Dorsolateral prefrontal cortex (tissue), 120 donors: ENCODE measurements at regions of chr12 and their contacts with region 1.

Region 1: DNA sequence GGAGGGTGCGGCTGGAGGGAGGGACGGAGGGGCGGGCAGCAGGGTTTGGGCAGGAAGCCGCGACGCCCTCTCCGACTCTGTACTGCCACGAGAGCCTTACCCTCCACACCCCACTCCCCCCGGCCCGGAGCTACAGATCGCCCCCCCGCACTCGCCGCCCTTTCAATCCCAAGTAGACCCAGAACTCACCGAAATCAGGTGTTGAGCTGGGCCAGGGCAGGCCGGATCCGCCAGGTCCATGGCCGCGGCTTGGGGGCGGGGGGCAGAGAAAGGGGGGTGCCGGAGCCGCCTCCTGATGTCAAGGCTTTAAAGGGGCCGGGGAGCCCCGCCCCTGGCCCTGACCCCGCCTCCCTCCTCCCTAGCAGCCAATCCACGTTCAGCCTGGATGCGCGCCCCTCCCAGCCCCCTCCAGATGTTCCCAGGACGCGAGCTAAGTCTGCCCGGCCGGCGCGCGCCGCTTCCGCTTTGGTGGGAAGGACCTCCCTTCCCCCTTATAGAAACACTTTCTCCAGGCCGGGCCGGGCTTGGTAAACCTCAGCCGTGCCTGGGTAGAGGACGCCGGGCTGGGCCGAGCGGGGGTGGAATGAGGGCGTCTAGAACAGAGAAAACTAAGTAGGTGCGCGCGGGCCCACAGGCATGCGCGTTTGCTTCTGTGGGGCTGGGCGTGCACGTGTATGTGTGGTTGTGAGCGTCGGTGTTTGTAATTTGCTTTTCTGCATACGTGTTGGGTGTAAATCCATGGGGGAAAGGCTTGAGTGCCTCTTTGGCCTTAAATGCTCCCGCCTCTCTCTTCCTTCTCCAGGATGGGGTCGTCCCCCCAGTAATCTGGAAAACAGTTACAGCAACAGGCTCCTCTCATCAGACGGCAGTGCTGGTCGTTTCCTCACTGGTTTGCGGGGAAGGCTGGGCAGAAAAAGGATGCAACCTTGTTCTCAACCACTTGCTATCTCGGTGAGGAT is at the start of gene NCKAP5L:
- DNase-seq: peak; percentile 90 to 95 (median 94)
- H3K4me3 ChIP-seq: peak within 1 kb of the TSS; percentile 53 to 95 (median 87)
- H3K27ac ChIP-seq: peak within 1 kb of the TSS in 58 of 59 donors; percentile 31 to 95 (median 89)
- H3K27me3 ChIP-seq: no peaks in the 10 kb centered on the region
- CTCF ChIP-seq: peak in 10 of 56 donors; percentile 3 to 29 (median 20)
- total RNA-seq, gene NCKAP5L: 17.3 to 37.7 (median 25.5) TPM

Region 2: DNA sequence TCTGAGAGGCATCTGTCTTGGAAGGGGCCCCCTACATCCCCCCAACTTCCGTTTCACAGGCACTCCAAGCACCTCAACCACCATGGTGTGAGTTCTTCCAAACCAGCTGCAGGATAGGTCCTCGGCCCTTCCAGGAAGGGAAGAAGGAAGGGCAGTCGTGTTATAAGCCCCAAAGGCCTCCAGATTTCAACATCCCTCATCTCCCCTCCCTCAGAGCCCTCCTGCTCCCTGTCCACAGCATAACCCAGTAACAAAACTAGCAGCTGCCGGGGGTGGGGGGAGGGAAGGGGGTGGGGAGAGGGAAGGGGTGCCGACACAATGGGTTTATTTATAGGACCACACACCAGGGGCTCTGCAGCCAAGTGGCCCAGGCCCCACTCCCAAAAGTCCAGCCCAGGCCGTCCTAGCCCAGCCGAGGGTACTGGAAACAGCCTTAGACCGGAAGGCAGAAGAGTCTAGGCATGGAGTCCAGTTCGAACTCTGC is 18.5 kb before region 1 on chr12:
- intact Hi-C with region 1: loop called in 1 of 2 experiments (anchors 2 kb)
- DNase-seq: peak in 3 of 10 donors; percentile 30 to 52 (median 35)
- H3K4me3 ChIP-seq: peak overlapping the region in 31 of 59 donors; percentile 2 to 57 (median 32)
- H3K27ac ChIP-seq: peak overlapping the region; percentile 71 to 98 (median 94)
- H3K27me3 ChIP-seq: no peaks in the 10 kb centered on the region
- CTCF ChIP-seq: no peak

Region 3: DNA sequence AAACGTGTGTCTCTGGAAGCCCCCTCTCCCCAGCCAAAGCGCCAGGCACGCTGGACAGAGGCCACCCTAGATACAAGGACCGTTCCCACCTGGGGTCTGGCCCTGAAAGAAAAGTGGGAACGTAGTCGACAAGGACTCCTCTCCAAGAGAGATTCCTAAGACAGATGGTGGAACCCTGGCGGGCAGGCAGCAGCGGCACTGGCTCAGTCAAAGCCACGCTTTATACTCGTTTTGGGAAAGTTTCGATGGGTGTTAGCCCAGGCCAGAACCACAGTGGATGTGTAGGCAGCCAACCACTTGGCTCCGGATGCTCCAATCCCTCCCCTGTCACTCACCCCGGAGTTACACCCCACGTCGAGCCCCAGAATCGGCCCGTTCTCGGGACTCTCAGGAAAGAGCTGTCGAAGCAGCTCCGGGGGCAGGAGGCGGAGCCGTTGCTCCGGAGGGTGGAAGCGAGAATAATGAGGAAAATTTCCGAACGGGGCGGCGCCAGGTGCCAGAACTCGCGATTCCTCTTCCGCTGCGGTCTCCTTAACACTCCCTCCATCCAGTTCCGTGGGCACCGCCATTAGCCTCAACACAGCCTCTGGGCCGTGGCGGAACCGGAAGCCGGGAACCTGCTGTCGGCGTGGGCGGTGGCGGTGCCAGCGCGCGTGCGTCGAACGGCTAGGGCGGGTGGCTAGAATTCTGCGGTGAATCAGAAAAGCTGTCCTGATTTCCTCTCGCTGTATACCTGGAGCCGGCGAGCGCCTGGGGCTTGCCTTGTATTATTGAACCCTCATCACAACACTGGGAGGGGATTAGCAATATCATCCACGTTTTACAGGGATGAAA is 14.3 kb after region 1 on chr12 and contains the start of gene BCDIN3D:
- intact Hi-C with region 1: loop called in 1 of 2 experiments (anchors 2 kb)
- DNase-seq: peak; percentile 81 to 94 (median 90)
- H3K4me3 ChIP-seq: peak within 1 kb of the TSS; percentile 51 to 96 (median 83)
- H3K27ac ChIP-seq: peak within 1 kb of the TSS; percentile 42 to 97 (median 87)
- H3K27me3 ChIP-seq: no peaks in the 10 kb centered on the region
- CTCF ChIP-seq: peak in 24 of 56 donors; percentile 5 to 55 (median 30)
- total RNA-seq, gene BCDIN3D: 2.4 to 8.0 (median 4.3) TPM

Region 4: DNA sequence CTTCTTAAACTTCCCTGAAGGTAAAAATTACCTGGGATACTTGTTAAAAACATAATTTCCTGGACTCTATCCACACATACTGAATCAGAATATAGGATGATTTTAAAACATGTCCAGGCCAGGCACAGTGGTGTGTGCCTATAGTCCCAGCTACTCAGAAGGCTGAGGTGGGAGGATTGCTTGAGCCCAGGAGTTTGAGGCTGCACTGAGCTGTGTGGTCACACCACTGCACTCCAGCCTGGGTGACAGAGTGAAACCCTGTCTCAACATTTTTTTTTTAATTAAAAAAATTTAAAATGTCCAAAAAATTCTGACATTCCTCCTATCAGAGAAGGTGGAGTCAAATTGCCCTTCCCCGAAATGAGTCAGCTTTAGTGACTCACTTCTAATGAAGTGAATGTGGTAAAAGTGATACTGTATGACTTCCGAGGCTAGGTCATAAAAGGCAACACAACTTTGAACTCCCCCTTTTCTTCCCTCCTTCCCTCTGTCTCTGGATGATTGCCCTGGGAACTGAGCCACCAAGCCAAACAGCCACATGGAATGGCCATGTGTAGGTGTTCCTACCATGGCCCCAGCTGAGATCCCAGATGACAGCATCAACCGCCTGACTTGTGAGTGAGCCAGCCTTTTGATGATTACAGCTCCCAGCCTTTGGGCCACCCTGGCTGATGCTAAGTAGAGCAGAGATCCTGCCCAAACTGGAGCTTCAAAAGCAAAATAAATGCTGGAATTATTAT is 418.6 kb after region 1 on chr12:
- intact Hi-C with region 1: no loop called
- DNase-seq: peak in 1 of 10 donors; percentile 88
- H3K4me3 ChIP-seq: no peak overlapping the region
- H3K27ac ChIP-seq: peak overlapping the region in 2 of 59 donors; percentile 43 to 89
- H3K27me3 ChIP-seq: no peaks in the 10 kb centered on the region
- CTCF ChIP-seq: no peak